Activated B cell treated with CpG ODN at 0.5 μM for 24 hours (primary cell): ENCODE measurements at regions of chr1 and their contacts with region 1.

Region 1: DNA sequence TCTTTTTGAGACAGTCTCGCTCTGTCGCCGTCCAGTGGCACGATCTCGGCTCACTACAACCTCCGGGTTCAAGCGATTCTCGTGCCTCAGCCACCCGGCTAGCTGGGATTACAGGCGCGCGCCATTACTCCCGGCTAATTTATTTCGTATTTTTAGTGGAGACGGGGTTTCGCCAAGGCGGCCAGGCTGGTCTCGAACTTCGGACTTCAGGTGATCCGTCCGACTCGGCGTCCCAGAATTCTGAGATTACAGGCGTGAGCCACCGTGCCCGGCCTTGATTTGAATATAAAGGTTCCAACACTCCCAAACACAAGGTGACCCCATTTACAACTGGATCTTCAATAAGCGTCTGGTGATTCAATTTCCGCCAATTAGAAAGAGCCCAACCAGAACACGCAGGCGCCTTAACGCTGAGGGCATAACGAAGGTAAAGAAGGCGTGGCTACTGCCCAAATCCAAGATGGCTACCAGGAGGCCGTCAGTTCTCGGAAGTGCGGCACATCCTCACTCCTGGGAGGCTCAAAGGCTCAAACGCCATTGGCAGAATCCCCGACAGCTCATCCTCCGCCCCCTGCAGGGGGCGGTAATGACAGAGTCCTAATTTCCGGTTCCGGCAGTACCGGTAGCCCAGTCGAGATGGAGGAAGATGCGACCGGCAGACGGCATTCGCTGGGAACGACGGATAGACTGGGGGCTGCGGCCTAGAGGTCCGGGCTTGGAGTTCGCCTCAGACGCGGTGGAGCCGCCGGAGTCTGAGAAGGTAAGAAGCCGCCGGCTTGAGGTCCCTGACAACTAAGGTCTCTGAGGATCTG is at the start of gene SLC25A44:
- DNase-seq: peak; percentile 93
- ATAC-seq: peak; percentile 98
- H3K4me3 Mint-ChIP-seq: peak within 1 kb of the TSS; percentile 96
- H3K27ac Mint-ChIP-seq: peak within 1 kb of the TSS; percentile 91
- H3K4me1 Mint-ChIP-seq: peaks cover 38% of the 10 kb centered on the region
- H3K27me3 Mint-ChIP-seq: no peaks in the 10 kb centered on the region
- CTCF ChIP-seq: no peak
- total RNA-seq, gene SLC25A44: 17.9 and 26.4 TPM in 2 replicates

Region 2: DNA sequence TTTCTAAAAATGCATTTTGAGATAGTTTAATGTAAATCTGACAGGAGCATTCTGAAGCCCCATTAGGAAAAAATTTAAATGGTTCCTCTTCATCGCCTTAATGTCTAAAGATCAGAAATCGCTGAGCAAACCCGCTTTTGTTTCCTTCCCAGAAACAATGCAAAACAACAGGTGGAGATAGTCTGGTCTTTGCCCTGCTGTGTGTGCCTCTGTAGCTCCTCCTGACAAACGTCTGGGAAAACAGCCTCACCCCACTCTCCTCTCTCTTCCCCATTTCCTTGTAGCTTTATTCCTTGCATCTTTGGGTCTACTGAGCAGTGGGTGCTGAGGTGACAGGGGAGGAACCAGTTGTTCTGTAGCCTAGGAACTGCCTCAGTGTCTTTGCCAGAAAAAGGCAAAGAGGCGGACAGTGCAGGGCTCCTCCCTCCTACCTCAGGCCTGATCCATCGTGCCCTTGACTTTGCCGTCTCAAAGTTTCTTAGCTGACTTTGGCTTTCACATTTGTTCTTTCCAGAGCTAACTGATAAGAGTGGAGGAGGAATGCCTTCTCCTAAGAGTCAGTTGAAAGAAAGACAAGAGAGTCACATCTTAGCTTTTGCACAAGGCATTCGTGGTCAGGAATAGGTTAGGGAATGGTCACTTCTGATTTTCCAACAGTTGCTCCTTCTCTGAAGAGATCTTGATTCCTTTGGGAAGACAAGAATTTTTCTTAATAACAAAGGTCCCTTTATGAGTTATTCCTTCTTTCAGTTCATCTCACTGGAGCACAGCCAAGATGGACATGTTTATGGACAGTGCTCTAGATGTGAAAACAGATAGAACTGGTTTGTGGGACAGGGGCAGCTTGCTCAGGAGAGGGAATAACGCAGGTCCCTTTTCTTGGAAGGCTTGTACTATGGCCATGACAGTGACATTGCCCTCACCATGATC is 309.4 kb before region 1 on chr1:
- CTCF ChIA-PET with region 1: no interaction called
- POLR2A ChIA-PET with region 1: no interaction called
- intact Hi-C with region 1: no loop called
- DNase-seq: no peak
- ATAC-seq: no peak
- H3K4me3 Mint-ChIP-seq: no peak overlapping the region
- H3K27ac Mint-ChIP-seq: no peak overlapping the region
- H3K4me1 Mint-ChIP-seq: peaks cover 12% of the 10 kb centered on the region
- H3K27me3 Mint-ChIP-seq: no peaks in the 10 kb centered on the region
- CTCF ChIP-seq: no peak

Region 3: DNA sequence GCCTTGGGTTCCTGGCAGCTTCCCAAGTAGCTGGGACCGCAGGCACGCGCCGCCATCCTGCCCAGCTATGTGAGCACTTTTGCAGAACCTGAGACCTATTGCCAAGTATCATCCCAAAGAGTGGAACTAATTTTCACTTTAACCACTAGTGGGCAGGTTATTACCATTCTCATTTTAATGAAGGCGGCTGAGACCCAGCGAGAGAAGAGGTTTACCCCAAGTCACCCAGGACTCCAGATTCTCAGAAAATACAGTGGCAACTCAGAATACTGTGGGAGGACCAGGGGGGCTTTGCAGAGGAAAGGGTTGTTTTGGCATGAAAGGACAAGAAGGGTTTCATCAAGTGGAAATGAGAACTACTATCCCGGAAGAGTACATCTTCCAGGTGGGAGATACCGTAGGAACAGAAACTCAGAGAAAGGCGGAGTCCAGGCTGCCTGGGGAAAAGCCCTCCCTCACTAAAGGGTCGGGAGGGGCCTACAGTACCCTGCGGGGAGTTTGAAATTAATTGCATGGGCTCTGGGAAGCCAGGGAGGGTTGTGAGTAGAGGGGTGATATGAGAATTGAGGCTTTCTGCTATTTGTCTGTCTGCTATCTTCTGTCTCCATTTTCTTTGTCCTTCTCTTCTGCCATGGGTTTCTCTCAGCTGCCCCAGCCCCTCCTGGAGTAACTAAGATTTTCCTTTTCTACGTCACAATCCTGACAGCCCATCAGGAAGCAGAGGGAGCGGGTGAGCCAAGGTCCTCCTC is 47.5 kb before region 1 on chr1:
- CTCF ChIA-PET with region 1: interaction called, 16 read pairs
- POLR2A ChIA-PET with region 1: interaction called, 24 read pairs
- intact Hi-C with region 1: loop called (anchors 1 kb)
- DNase-seq: no peak
- ATAC-seq: peak; percentile 59
- H3K4me3 Mint-ChIP-seq: peak overlapping the region; percentile 66
- H3K27ac Mint-ChIP-seq: peak overlapping the region; percentile 71
- H3K4me1 Mint-ChIP-seq: peaks cover 48% of the 10 kb centered on the region
- H3K27me3 Mint-ChIP-seq: peaks cover 6% of the 10 kb centered on the region
- CTCF ChIP-seq: no peak

Region 4: DNA sequence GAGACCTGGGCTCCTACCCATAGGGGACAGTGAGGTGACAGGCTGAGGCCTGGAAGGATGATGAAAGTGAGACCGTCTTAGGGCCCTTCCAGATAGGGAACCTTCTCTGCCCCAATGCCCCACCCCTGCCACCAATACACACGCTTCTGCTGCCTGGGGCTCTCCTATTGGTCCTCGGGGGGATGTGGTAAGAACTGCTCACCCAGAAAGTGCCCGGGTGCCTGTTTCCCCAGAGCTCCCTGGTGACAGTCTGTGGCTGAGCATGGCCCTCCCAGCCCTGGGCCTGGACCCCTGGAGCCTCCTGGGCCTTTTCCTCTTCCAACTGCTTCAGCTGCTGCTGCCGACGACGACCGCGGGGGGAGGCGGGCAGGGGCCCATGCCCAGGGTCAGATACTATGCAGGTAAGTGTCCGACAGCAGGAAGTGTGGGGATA is 39.4 kb before region 1 on chr1:
- CTCF ChIA-PET with region 1: interaction called, 5 read pairs
- POLR2A ChIA-PET with region 1: interaction called, 24 read pairs
- intact Hi-C with region 1: loop called (anchors 1 kb)
- DNase-seq: peak; percentile 66
- ATAC-seq: peak; percentile 95
- H3K4me3 Mint-ChIP-seq: peak overlapping the region; percentile 81
- H3K27ac Mint-ChIP-seq: peak overlapping the region; percentile 82
- H3K4me1 Mint-ChIP-seq: peaks cover 95% of the 10 kb centered on the region
- H3K27me3 Mint-ChIP-seq: peaks cover 9% of the 10 kb centered on the region
- CTCF ChIP-seq: no peak

Region 5: GRCh38 chr1:156625436-156626078 is 431.9 kb after region 1 on chr1:
- CTCF ChIA-PET with region 1: no interaction called
- POLR2A ChIA-PET with region 1: no interaction called
- intact Hi-C with region 1: no loop called
- DNase-seq: peak; percentile 66
- ATAC-seq: peak; percentile 71
- H3K4me3 Mint-ChIP-seq: peak overlapping the region; percentile 74
- H3K27ac Mint-ChIP-seq: peak overlapping the region; percentile 3
- H3K4me1 Mint-ChIP-seq: peaks cover 12% of the 10 kb centered on the region
- H3K27me3 Mint-ChIP-seq: peaks cover 32% of the 10 kb centered on the region
- CTCF ChIP-seq: peak; percentile 27